ENCODE measurements at regions of chr15 and their contacts with region 1.

Region 1: GRCh38 chr15:98518823-98519561 is 129.3 kb upstream of the IGF1R start:
- DNase-seq: peak; percentile 58
- H3K4me3 Mint-ChIP-seq: no peak overlapping the region
- H3K27ac Mint-ChIP-seq: no peak overlapping the region
- H3K4me1 Mint-ChIP-seq: peaks cover 9% of the 10 kb centered on the region
- H3K27me3 Mint-ChIP-seq: peaks cover 5% of the 10 kb centered on the region
- CTCF ChIP-seq: peak; percentile 83

Region 2: DNA sequence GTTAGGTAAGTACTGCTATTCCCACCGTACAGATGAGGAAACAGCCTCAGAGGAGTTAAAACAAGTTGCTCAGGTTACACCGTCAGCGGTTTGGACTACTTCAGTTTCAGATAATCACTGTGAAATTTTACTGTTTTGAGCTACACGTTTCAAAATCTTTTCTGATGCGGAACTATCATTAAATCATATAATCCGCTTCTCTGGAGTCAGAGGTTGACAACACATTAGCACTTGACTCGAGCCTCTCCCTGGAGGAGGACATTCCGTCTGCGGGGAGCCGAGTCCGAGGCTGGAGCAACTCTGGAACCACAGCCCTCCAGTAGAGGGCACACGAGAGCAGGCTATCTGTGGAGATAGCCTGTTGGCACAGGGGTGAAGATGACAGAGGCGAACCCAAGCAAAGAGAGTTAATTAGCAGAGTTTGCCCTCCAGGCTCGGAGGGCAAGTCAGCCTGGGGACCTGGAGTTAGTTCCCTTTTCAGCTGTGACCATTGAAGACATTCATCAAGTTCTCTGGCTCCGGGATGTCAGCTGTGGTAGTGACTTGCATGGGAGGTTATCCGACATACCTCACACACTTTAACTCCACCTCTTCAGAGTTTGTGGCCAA is 260.6 kb after region 1 on chr15:
- CTCF ChIA-PET with region 1: no interaction called
- intact Hi-C with region 1: loop called (anchors 5 kb)
- DNase-seq: peak; percentile 87
- H3K4me3 Mint-ChIP-seq: no peak overlapping the region
- H3K27ac Mint-ChIP-seq: no peak overlapping the region
- H3K4me1 Mint-ChIP-seq: peaks cover 35% of the 10 kb centered on the region
- H3K27me3 Mint-ChIP-seq: no peaks in the 10 kb centered on the region
- CTCF ChIP-seq: peak; percentile 94

Region 3: DNA sequence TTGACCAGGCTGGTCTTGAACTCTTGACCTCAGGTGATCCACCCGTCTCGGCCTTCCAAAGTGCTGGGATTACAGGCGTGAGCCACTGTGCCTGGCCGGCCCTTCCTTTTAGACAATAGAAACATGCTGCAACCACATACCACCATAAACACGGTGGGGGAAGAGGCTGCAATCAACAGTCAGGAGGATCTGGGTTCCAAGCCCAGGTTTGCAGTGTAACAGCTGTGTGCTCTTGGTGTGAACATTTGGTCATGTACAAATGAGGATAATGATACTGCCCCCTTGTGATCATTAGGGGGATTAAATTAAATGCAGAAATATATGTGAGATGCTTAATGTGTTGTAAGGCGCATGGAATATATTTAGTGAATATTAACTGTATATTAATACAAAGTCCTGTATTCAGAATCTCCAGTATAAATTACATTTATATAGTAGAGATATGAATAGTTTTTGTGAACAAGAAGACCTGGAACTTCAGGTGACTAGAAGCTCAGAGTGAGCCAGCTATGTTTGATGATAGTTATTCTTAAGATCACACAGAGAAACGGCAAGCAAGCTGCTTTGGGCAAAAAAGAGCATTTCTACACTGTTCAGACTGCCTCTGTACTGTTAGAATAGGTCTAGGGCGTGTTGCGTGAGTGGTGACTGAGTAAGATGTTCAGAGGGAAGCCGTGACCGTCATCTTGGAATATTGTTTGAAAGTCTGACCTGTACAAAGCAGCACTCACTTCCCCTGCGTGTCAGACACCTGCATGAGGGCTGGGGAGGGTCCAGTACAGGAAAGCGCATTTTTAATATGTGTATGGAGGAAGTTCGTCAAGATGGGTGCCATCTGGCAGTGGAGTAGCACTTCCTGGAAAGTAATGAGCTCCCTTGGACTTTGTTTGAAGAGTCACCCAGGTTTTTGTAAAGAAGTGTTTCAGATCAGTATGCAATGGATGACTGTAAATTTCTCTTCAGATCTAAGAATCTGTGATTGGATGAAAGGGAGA is 362.8 kb after region 1 on chr15:
- CTCF ChIA-PET with region 1: interaction called, 8 read pairs
- intact Hi-C with region 1: loop called (anchors 1 kb)
- DNase-seq: no peak
- H3K4me3 Mint-ChIP-seq: no peak overlapping the region
- H3K27ac Mint-ChIP-seq: no peak overlapping the region
- H3K4me1 Mint-ChIP-seq: no peaks in the 10 kb centered on the region
- H3K27me3 Mint-ChIP-seq: no peaks in the 10 kb centered on the region
- CTCF ChIP-seq: peak; percentile 61

Region 4: GRCh38 chr15:98904544-98904943 is 385.6 kb after region 1 on chr15:
- CTCF ChIA-PET with region 1: interaction called, 4 read pairs
- intact Hi-C with region 1: loop called (anchors 2 kb)
- DNase-seq: peak; percentile 55
- H3K4me3 Mint-ChIP-seq: no peak overlapping the region
- H3K27ac Mint-ChIP-seq: no peak overlapping the region
- H3K4me1 Mint-ChIP-seq: peaks cover 11% of the 10 kb centered on the region
- H3K27me3 Mint-ChIP-seq: no peaks in the 10 kb centered on the region
- CTCF ChIP-seq: peak; percentile 40